Right ventricle myocardium inferior (tissue), 1 donor: ENCODE measurements at regions of chr2 and their contacts with region 1.

Region 1: DNA sequence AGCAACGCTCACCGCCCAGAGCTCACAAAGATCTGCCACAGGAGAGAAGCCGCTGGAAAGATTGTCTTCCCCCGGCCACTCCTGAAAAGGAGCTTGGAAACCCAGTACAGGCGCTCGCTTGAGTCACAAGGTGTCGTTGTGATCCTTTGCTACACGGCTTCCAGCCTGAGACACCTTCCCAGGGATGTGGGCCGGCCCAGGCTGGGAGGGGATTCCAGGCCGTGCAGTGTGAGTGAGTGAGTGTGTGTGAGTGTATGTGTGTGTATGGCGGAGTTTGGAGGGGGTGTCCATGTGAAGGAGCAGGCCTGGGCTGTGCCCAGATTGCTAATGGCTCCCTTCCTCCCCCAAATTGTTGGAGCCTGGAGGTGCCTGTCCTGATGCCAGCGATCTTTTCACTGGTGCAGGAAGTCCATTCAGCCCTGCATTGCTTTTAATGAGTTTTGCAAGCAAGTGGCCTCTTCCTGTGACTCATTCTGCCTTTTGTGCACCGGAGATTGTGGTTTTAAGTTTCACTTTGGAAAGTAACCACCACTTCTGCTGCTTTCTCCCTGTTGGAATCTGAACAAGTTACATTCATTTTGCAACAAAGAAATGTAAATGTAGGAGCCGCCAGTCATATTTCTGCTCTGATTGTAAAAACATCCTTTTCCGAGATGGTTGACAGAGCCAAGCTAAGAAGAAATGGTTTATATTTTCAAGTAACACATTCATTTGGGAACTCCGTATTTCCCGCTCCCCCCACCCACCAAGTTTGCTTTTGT is 83.7 kb downstream of the LPIN1 start:
- DNase-seq: peak; percentile 73
- ATAC-seq: peak; percentile 83

Region 2: DNA sequence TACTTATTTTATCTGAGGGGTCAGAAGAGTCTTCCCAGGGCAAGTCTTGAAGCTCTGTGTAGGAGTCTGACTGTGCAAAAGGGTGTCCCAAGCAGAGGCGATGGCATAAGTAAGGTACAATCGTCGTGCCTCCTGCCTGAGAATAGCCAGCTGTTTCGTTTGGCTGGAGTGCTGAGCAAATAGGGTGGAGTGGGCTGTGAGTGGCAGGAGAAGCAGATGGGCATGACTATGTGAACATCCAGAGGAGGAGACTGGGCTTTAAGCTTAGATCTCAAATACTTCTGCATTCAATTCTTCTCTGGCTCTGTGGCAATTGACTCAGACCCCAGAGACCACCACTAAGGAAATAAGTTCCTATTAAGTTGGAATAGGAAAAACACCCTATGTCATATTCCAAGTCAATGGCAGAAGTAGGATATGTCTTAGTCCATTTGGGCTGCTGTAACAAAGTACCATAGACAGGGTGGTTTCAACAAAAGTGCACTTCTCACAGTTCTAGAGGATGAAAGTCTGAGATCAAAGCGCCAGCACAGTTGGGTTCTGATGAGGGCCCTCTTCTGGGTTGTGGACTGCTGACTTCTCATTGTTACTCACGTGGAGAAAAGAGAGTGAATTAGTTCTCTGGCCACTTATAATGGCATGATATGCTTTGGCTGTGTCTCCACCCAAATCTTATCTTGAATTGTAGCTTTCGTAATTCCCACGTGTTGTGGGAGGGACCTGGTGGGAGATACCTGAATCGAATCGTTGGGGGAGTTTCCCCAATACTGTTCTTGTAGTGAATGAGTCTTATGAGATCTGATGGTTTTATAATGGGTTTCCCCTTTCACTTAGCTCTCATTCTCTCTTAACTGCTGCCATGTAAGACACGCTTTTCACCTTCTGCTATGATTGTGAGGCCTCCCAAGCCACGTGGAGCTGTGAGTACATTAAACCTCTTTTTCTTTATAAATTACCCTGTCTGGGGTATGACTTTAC is 36.5 kb after region 1 on chr2:
- intact Hi-C with region 1: no loop called
- DNase-seq: no peak
- ATAC-seq: no peak

Region 3: GRCh38 chr2:12797815-12798214 is 967.7 kb after region 1 on chr2:
- intact Hi-C with region 1: loop called (anchors 2 kb)
- DNase-seq: no peak
- ATAC-seq: no peak

Region 4: DNA sequence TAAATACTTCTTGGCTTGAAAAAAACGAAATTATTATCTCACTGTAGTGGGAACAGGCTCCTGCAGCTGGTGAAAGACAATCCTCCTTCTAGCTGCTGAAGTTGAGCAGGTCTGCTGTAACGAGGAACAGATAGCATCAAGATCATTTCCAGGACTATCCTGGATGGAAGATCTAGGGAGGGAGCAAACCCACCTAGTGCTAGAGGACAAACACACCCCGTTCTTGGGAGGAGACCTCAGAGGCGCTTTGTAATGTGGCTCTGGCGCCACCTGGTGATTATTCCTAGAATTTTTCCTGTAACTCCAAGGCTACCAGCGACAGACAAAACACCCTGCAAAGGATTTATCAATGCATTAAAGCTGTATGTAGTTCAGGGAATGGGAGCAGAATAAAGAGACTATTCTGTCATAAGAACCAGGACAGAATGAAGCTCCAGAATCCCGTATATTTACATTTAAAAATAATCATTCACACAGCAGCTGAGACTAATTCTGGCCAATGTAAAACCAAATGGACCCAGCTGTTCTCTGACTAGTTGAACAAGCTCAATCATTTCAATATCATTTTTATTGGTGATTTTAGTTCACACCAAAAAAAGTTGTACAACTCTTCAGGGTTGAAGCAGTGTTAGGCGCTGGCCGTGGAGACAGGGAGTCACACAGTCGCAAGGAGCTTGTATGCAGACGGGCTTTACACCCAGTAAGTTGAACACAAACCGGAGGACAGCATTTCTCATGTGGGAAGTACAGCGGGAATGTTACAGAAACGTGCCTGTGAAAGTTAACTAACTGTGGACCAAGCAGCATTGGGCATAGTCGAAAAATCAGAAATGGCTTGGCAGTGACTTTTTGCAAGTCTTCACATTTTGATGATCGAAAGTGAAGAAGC is 1176.9 kb after region 1 on chr2:
- intact Hi-C with region 1: loop called (anchors 1 kb)
- DNase-seq: no peak
- ATAC-seq: peak; percentile 90